IMR-90 (cell line): ENCODE measurements at regions of chr2 and their contacts with region 1.

Region 1: GRCh38 chr2:204538182-204539018 is 6.9 kb upstream of the PARD3B start:
- DNase-seq: peak; percentile 96
- ATAC-seq: peak; percentile 87
- H3K4me3 ChIP-seq: peak overlapping the region; percentile 39
- H3K27ac ChIP-seq: peak overlapping the region; percentile 79
- H3K4me1 ChIP-seq: peaks cover 7% of the 10 kb centered on the region; the same call in 1 of the 2 replicates
- H3K27me3 ChIP-seq: no peaks in the 10 kb centered on the region
- CTCF ChIP-seq: no peak
- POLR2A ChIP-seq: peak; percentile 44; the same call in 1 of the 2 replicates
- RAD21 ChIP-seq: no peak; the same call in none of the 2 replicates

Region 2: DNA sequence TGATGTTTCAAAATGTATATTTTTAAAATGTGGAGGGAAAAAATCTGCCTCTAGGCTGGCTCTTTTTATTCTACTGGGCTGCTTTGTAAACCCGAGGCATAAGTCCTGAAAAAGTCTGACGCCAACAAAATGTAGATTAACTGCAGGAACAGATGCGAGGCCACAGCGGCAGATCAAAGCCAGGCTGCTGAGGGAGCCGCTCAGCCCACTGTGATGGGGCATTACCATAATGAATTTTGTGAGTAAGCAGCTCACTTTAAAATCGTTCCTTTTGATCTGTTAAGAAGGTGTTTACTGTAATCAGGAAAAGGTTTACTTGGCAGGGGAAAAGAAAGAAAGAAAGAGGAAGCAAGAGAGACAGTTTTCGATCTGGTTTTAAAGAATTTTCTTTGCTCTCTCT is 332.9 kb before region 1 on chr2:
- CTCF ChIA-PET with region 1: no interaction called
- POLR2A ChIA-PET with region 1: no interaction called
- dilution Hi-C with region 1: no loop called
- in situ Hi-C with region 1: no loop called
- intact Hi-C with region 1: no loop called
- DNase-seq: no peak
- ATAC-seq: no peak
- H3K4me3 ChIP-seq: no peak overlapping the region
- H3K27ac ChIP-seq: no peak overlapping the region
- H3K4me1 ChIP-seq: no peaks in the 10 kb centered on the region
- H3K27me3 ChIP-seq: peaks cover 18% of the 10 kb centered on the region
- CTCF ChIP-seq: no peak
- POLR2A ChIP-seq: no peak
- RAD21 ChIP-seq: no peak

Region 3: DNA sequence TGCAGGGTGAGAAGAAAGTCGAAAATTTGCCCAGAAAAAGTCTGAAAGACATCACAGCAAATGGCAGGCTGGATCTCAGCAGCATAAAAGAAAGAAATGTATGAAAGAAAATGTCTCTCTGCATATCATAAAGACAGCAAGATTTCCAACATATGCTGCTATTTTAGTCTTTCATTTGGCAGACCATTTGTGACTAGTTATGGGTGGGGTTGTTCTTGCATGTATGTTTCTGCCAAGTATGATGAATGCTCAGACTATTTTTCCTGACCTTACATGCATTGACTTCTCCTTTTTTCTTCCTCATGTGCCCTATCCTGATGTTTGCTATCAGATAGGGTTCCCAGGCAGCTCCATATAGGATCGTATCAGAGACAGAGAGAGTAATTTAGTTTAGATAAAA is 51.6 kb before region 1 on chr2:
- CTCF ChIA-PET with region 1: no interaction called
- POLR2A ChIA-PET with region 1: no interaction called
- dilution Hi-C with region 1: no loop called
- in situ Hi-C with region 1: no loop called
- intact Hi-C with region 1: loop called (anchors 5 kb)
- DNase-seq: peak; percentile 64
- ATAC-seq: peak; percentile 35
- H3K4me3 ChIP-seq: no peak overlapping the region
- H3K27ac ChIP-seq: peak overlapping the region; percentile 77; the same call in 1 of the 2 replicates
- H3K4me1 ChIP-seq: peaks cover 8% of the 10 kb centered on the region; the same call in 1 of the 2 replicates
- H3K27me3 ChIP-seq: no peaks in the 10 kb centered on the region
- CTCF ChIP-seq: no peak
- POLR2A ChIP-seq: no peak
- RAD21 ChIP-seq: no peak